Aorta (tissue), 5 donors: ENCODE measurements at regions of chr20 and their contacts with region 1.

Region 1: DNA sequence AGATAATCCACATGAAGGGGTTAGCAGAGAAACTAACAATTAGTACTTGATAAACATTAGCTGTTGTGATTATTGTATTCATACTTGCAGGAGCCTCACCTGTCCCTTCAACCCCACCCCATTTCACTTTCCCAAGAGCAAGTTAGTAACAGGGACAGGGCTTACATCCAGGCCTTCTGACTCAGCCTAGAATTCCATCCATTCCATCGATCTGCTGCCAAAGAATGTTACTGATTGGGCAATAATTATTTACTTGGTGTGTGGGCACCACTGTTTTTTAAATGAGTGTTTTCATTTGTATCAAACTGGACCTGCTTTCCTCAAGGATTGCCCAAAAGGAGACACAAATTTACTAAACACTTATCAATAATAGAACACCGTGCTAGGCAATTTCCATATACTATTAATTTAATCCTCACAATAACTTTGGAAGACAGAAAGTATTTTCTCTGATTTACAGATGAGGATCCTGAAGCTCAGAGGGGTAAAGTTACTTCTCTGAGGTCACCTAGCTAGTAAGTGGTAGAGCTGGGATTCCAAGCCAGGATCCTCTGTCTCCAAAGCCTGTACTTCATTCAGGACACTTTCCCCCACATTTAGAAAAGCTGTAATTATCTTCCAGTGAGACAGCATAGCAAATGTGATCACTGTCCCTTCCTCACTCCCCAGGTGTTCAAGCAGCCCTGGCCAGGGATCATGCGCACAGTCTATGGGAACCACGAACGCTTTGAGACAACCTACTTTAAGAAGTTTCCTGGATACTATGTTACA is 32.8 kb downstream of the GSS start:
- DNase-seq: no peak
- ATAC-seq: peak; percentile 56
- H3K4me3 ChIP-seq: no peak overlapping the region
- H3K27ac ChIP-seq: peak overlapping the region in 1 of 2 donors; percentile 60
- H3K4me1 ChIP-seq: peaks cover 2 to 8% of the 10 kb centered on the region in 2 donors
- H3K27me3 ChIP-seq: no peaks in the 10 kb centered on the region

Region 2: DNA sequence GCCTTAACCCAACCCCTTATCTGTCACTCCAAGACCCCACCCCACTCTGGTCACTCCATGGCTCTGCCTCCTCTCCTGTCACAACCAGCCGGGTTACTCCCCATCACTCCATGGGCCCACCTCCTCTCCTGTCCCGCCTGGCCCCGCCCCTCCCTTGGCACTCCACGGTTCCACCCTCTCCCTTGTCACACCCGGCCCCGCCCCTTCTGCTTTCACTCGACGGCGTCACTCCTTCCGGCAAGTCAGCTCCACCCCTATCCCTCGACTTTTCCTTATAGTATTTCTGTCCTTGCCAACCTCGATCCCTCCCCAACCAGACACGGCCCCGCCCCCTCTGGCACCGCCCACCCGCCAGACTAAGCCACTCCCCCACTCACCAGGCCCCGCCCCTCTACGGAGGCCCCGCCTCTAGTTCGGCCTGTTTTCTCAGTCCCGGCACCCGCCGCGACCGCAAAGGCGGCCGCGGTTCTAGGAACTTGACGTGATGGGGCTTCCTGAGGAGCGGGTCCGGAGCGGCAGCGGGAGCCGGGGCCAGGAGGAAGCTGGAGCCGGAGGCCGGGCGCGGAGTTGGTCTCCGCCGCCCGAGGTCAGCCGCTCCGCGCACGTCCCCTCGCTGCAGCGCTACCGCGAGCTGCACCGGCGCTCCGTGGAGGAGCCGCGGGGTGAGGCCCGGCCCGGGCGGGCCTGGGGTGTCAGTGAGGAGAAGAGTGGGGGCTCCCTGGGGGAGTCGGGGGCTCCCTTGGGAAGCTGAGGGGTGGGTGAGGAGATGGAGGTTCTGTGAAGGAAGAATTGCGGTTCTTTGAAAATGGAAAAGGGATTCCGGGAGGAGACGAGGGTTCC is 46.5 kb before region 1 on chr20 and contains the start of gene ACSS2:
- intact Hi-C with region 1: loop called in 1 of 2 experiments (anchors 5 kb)
- DNase-seq: peak; percentile 100
- ATAC-seq: peak; percentile 94
- H3K4me3 ChIP-seq: peak within 1 kb of the TSS; percentile 64 to 98
- H3K27ac ChIP-seq: peak within 1 kb of the TSS; percentile 52 to 83
- H3K4me1 ChIP-seq: peaks cover 0 to 4% of the 10 kb centered on the region in 2 donors
- H3K27me3 ChIP-seq: no peaks in the 10 kb centered on the region
- total RNA-seq, gene ACSS2: 64.8 to 87.4 TPM